ENCODE measurements at regions of chr9 and their contacts with region 1.

Region 1: DNA sequence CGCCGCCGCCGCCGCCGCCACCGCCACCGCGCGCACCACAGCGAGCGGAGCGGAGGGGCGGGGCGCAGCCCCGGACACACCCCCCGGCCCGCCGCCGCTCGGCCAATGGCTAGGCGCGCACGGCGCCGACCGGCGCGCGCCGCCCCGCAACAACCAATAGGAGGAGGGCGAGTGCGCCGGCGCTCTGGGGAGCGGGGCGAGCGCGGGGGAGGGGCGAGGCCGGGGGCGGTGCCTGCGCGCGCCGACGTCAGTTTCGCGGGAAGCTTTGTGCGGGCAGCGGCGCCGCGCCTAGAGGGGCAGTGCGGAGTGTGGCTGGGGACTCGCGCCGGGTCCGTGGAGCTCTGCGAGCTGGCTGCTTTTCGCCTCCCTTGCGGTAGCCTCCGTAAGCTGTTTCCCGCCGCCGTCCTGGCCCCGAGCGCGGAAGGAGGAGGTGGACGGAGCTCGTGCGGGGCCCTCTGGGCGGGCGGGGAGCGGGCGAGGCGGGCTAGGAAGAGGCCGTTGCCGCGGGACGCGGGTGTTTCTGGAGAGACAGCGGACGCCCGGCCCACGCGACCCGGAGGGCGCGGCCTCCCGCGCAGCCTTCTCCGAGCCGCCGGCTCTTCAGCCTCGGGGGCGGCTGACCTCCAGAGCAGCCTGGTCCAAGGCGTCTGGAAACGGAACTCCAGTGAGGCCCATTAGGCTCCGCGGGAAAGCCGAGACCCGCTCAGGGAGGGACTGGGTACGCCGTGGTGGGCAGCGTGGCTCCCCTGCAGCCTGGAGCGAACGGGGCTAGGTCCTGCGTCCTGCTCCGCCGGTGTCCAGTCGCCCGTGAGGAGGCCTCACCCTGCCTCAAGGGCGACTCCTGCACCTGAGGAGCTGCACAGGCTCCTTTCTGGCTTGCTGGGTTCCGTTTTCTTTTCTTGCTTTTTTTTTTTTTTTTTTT is at the start of gene ZMYND19:
- DNase-seq: peak; percentile 91 to 96
- ATAC-seq: peak; percentile 96 to 99 (median 96)
- H3K4me3 ChIP-seq: peak within 1 kb of the TSS; percentile 72
- H3K4me3 Mint-ChIP-seq: peak within 1 kb of the TSS; percentile 94
- H3K27ac ChIP-seq: peak within 1 kb of the TSS; percentile 57
- H3K27ac Mint-ChIP-seq: peak within 1 kb of the TSS; percentile 82 to 92
- H3K4me1 ChIP-seq: peaks cover 17% of the 10 kb centered on the region
- H3K4me1 Mint-ChIP-seq: peaks cover 6 to 14% of the 10 kb centered on the region in 2 donors
- H3K27me3 ChIP-seq: no peaks in the 10 kb centered on the region
- H3K27me3 Mint-ChIP-seq: no peaks in the 10 kb centered on the region
- CTCF ChIP-seq: no peak
- total RNA-seq, gene ZMYND19: 6.5 to 18.8 (median 16.3) TPM

Region 2: GRCh38 chr9:137605121-137606004 is 14.6 kb after region 1 on chr9 and contains the start of gene ARRDC1:
- intact Hi-C with region 1: loop called (anchors 2 kb)
- DNase-seq: peak; percentile 77 to 96
- ATAC-seq: peak; percentile 82 to 94 (median 85)
- H3K4me3 ChIP-seq: peak within 1 kb of the TSS; percentile 33
- H3K4me3 Mint-ChIP-seq: peak within 1 kb of the TSS; percentile 82
- H3K27ac ChIP-seq: no peak within 1 kb of the TSS
- H3K27ac Mint-ChIP-seq: peak within 1 kb of the TSS in 1 of 2 donors; percentile 22
- H3K4me1 ChIP-seq: peaks cover 30% of the 10 kb centered on the region
- H3K4me1 Mint-ChIP-seq: peaks cover 7 to 22% of the 10 kb centered on the region in 2 donors
- H3K27me3 ChIP-seq: no peaks in the 10 kb centered on the region
- H3K27me3 Mint-ChIP-seq: no peaks in the 10 kb centered on the region
- CTCF ChIP-seq: no peak
- total RNA-seq, gene ARRDC1: 80.7 to 105 (median 92.9) TPM